ENCODE measurements at regions of chr16 and their contacts with region 1.

Region 1: GRCh38 chr16:76071690-76072089 is 205.5 kb upstream of the CNTNAP4 start:
- DNase-seq: no peak
- ATAC-seq: no peak
- H3K4me3 Mint-ChIP-seq: no peak overlapping the region
- H3K27ac Mint-ChIP-seq: no peak overlapping the region
- H3K4me1 Mint-ChIP-seq: no peaks in the 10 kb centered on the region
- H3K27me3 Mint-ChIP-seq: peaks cover 2% of the 10 kb centered on the region

Region 2: DNA sequence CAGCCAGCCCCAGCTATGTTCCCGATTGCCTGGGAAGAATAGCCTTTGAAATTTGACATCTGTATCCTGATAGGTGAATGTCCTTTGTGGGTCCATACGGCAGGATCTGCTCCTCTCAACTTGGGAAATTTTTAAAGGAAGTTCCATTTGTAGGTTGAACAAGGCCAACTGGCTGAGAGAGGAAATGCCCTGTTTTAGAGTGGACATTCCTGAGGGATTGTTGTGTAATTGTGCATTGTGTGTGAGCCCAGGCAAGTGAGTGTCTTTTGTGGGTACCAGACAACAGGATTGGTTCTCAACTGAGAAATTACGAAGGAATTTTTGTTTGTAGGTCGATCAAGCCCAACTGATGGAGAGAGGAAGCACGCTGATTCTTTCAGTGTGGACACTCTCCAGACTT is 392.3 kb before region 1 on chr16:
- CTCF ChIA-PET with region 1: no interaction called
- POLR2A ChIA-PET with region 1: no interaction called
- intact Hi-C with region 1: no loop called
- DNase-seq: no peak
- ATAC-seq: no peak
- H3K4me3 Mint-ChIP-seq: no peak overlapping the region
- H3K27ac Mint-ChIP-seq: no peak overlapping the region
- H3K4me1 Mint-ChIP-seq: no peaks in the 10 kb centered on the region
- H3K27me3 Mint-ChIP-seq: no peaks in the 10 kb centered on the region

Region 3: DNA sequence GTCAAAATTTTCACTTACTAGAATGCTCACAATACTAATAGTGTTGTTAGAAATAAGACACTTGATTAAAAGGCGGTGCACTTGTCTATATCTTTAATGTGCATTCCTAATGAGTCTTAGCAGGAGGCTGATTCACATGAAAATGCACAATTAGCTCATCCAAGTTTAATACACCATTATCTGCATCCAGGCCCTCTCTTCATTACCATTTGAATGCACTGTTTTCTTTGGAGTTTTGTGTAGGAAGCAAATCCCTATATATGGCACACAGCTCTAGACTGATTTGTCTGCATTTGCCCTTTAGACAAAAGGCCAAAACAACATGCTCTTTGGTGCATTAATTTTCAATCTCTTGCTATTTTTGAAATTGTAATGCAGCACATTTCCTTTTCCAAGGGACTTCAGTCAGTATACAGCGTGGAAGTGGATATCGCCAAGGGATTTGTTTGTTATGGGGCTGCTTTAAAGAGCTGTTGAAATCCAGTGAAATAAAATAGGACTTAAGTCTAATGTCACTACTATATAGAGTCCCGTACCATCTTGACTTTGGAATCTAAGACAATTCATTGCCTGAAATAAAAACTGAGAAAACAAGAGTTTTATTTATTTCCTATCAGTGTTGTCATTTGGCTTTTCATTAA is 87.8 kb before region 1 on chr16:
- CTCF ChIA-PET with region 1: no interaction called
- POLR2A ChIA-PET with region 1: no interaction called
- intact Hi-C with region 1: loop called in 1 of 2 experiments (anchors 10 kb)
- DNase-seq: no peak
- ATAC-seq: no peak
- H3K4me3 Mint-ChIP-seq: no peak overlapping the region
- H3K27ac Mint-ChIP-seq: no peak overlapping the region
- H3K4me1 Mint-ChIP-seq: no peaks in the 10 kb centered on the region
- H3K27me3 Mint-ChIP-seq: no peaks in the 10 kb centered on the region

Region 4: GRCh38 chr16:76023835-76024234 is 47.9 kb before region 1 on chr16:
- CTCF ChIA-PET with region 1: no interaction called
- POLR2A ChIA-PET with region 1: no interaction called
- intact Hi-C with region 1: loop called in 1 of 2 experiments (anchors 5 kb)
- DNase-seq: no peak
- ATAC-seq: no peak
- H3K4me3 Mint-ChIP-seq: no peak overlapping the region
- H3K27ac Mint-ChIP-seq: no peak overlapping the region
- H3K4me1 Mint-ChIP-seq: no peaks in the 10 kb centered on the region
- H3K27me3 Mint-ChIP-seq: no peaks in the 10 kb centered on the region

Region 5: DNA sequence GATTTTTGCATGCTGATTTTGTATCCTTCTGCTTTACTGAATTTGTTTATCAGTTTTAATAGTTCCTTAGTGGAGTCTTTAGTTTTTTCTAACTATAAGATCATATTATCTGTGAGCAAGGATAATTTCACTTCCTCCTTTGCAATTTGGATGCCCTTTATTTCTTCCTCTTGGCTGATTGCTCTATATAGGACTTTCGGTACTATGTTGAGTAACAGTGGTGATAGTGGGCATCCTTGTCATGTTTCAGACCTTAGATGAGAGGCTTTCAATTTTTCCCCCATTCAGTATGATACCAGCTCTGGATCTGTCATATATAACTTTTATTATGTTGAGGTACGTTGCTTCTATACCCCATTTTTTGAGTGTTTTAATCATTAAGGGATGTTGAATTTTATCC is 19.0 kb before region 1 on chr16:
- CTCF ChIA-PET with region 1: no interaction called
- POLR2A ChIA-PET with region 1: no interaction called
- intact Hi-C with region 1: no loop called
- DNase-seq: no peak
- ATAC-seq: no peak
- H3K4me3 Mint-ChIP-seq: no peak overlapping the region
- H3K27ac Mint-ChIP-seq: no peak overlapping the region
- H3K4me1 Mint-ChIP-seq: no peaks in the 10 kb centered on the region
- H3K27me3 Mint-ChIP-seq: no peaks in the 10 kb centered on the region

Measured in activated CD4-positive, alpha-beta T cell treated with anti-CD3 and anti-CD28 coated beads for 36 hours (primary cell).